Right ventricle myocardium superior (tissue), 1 donor: ENCODE measurements at regions of chr2 and their contacts with region 1.

Region 1: DNA sequence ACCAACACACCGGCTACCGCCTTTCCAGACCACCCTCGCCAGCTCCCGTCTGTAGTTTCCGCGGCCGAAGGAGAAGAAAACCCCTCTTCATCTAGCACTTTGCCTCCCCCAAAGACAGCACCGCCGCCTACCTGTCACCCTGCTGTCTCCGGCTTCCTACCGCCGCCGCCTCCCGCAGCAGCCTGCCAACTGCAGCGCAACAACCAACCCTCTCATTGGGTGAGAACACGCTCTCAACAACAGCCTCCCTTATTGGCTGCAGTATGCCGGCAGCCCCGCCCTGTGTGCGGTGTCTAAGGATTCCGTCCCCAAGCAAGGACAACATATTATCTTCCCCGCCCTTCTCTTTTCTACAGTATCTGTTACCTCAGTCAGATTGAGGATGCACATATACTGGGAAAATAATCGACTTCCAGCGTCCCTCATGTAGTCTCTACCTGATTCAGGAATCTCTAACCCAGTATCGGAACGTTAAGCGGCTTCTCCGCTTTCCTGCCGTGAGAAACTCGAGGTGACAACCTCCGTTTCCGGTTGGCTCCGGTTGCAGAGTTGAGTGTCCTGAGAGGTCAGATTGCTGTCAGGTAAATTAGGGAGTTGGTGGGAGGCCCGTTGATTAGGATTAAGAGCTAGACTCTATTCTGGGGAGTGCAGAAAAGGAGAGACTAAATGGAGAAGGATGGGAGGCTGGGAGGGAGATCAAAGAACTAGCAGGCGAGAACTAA is at the starts of genes HYCC2 and NDUFB3:
- DNase-seq: peak; percentile 94
- ATAC-seq: peak; percentile 99
- total RNA-seq, gene HYCC2: 12.0 TPM
- total RNA-seq, gene NDUFB3: 541 TPM

Region 2: GRCh38 chr2:200901459-200902072 is 170.1 kb before region 1 on chr2:
- intact Hi-C with region 1: loop called (anchors 5 kb)
- DNase-seq: no peak
- ATAC-seq: peak; percentile 77

Region 3: DNA sequence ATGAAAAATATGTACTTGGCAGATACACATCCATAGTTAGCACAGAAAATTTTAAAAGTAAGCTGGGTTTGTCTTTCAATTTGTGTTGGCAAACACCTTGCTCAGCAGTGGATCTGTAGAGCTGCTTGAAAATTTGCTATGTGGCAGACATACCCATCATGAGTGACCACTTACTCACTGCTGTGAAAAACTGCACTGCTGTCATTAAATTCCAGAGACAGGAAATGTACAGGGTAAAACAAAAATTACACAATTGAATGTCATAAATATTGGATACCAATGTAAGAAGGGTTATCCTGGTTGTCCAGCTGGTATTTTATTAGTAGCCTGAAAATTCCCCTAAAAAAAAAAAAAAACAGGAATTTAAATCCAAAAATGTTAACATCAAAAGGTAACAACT is 158.0 kb before region 1 on chr2:
- intact Hi-C with region 1: loop called (anchors 5 kb)
- DNase-seq: no peak
- ATAC-seq: no peak

Region 4: GRCh38 chr2:200963124-200963917 is 108.3 kb before region 1 on chr2 and contains the start of gene ORC2:
- intact Hi-C with region 1: loop called (anchors 5 kb)
- DNase-seq: peak; percentile 96
- ATAC-seq: peak; percentile 99
- total RNA-seq, gene ORC2: 20.4 TPM

Region 5: GRCh38 chr2:201118121-201118960 is 46.7 kb after region 1 on chr2:
- intact Hi-C with region 1: loop called (anchors 5 kb)
- DNase-seq: peak; percentile 95
- ATAC-seq: peak; percentile 57

Region 6: GRCh38 chr2:201144101-201145051 is 72.7 kb after region 1 on chr2:
- intact Hi-C with region 1: no loop called
- DNase-seq: no peak
- ATAC-seq: peak; percentile 28

Region 7: DNA sequence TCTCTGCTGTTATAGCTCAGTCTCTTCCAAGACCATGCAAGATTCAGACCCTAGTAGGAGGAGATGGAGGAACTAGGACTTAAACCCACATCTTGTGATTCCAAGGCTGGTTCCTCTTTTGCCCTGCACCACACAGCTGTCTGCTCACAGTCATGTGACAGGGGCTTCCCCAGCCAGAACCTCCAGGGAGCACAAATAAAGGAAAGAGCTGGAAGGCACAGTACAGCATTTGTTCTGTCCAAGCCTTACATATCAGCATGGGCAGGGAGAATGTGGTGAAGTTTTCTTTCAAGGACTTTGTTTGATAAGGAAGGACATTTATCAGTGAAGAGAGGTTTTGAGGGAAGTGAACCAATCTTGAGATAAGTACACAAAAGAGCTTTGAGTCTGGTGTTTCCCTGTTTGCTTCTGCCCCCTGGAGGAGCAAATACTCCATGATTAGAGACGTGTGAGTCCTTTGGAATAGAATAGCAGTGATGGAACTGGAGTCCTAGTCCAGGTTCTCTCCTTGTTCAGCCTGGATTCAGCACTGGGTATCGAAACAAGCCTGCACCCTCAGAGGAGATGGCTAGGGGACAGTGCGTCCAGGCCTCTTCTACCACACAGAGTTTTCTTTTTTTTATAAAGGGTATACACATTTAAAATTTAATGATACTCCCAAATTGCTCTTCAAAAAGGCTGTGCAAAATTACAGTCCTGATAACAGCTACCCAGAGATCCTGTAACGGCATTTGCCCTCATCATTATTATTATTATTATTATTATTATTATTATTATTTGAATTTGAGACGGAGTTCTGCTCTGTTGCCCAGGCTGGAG is 86.7 kb after region 1 on chr2:
- intact Hi-C with region 1: loop called (anchors 10 kb)
- DNase-seq: peak; percentile 77
- ATAC-seq: peak; percentile 80

Region 8: DNA sequence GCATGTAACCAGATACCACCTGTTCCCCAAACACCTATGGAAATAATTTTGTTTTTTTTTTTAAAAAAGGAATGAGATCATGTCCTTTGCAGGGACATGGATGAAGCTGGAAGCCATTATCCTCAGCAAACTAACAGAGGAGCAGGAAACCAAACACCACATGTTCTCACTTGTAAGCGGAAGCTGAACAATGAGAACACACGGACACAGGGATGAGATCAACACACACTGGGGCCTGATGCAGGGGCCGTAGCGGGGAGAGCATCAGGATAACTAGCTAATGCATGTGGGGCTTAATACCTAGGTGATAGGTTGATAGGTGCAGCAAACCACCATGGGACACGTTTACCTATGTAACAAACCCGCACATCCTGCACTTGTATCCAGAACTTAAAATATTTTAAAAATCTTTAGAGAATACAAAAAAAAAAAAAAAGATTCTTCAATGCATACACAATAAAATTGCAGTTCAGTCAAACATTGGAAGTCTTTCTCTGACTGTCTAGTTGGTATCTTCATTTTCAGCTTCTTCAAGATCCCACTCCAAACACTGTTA is 99.7 kb after region 1 on chr2:
- intact Hi-C with region 1: loop called (anchors 5 kb)
- DNase-seq: no peak
- ATAC-seq: no peak